HepG2 (cell line): ENCODE measurements at regions of chr1 and their contacts with region 1.

Region 1: DNA sequence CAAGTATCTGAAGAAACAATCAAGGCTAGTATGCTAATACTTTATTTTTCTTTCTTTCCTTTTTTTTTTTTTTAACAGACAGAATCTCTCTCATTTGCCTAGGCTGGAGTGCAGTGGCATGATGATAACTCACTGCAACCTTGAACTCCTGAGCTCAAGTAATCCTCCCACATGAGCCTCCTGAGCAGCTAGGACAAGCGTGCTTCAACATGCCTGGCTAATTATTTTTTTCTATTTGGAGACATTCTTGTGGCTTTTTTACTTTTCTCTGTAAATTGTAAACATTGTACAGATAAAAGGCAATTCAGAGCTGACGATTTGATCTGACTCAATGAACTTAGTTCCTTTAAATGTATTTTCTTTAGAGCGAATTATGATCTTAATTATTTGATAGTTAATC is 41.4 kb downstream of the CCDC18 start:
- DNase-seq: peak; percentile 87
- ATAC-seq: peak; percentile 91
- H3K4me3 ChIP-seq: no peak overlapping the region; a peak in 1 of 6 replicates
- H3K27ac ChIP-seq: peak overlapping the region; percentile 71
- H3K4me1 ChIP-seq: peaks cover 28% of the 10 kb centered on the region
- H3K27me3 ChIP-seq: no peaks in the 10 kb centered on the region
- CTCF ChIP-seq: no peak
- EP300 ChIP-seq: peak in 1 of 2 experiments; percentile 87; a peak in 2 of 4 replicates
- POLR2A ChIP-seq: no peak
- RAD21 ChIP-seq: no peak

Region 2: GRCh38 chr1:93275634-93276295 is 53.9 kb after region 1 on chr1:
- CTCF ChIA-PET with region 1: no interaction called
- POLR2A ChIA-PET with region 1: interaction called, 12 read pairs
- in situ Hi-C with region 1: no loop called
- intact Hi-C with region 1: no loop called
- DNase-seq: peak; percentile 86
- ATAC-seq: peak; percentile 99
- H3K4me3 ChIP-seq: peak overlapping the region; percentile 22 to 56 (median 46); a peak in 5 of 6 replicates
- H3K27ac ChIP-seq: peak overlapping the region; percentile 94
- H3K4me1 ChIP-seq: peaks cover 37% of the 10 kb centered on the region
- H3K27me3 ChIP-seq: no peaks in the 10 kb centered on the region
- CTCF ChIP-seq: no peak
- EP300 ChIP-seq: peak in 1 of 2 experiments; percentile 34; a peak in 1 of 4 replicates
- POLR2A ChIP-seq: no peak
- RAD21 ChIP-seq: no peak

Region 3: DNA sequence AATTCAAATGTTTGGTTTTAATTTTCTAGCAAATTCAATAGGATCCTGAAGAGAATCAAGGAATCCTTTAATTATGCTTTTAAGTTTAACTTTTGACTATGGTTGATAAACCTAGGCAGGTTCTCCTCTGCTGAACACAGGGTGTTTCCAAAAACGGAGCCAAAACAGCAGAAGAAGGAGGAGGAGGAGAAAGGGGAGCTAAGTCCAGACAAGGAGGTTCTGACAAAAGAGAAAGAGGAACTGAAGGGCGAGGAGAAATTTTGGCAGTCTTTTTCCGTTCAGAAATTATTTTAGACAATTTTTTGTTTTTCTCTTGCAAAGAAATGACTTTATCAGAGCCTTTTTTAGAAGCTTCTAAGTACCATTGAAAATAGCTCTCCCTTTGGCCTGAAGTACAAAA is 192.8 kb after region 1 on chr1:
- CTCF ChIA-PET with region 1: no interaction called
- POLR2A ChIA-PET with region 1: no interaction called
- in situ Hi-C with region 1: no loop called
- intact Hi-C with region 1: no loop called
- DNase-seq: no peak
- ATAC-seq: no peak
- H3K4me3 ChIP-seq: no peak overlapping the region
- H3K27ac ChIP-seq: no peak overlapping the region
- H3K4me1 ChIP-seq: 0 out of 2 replicates have a peak, but pooled peaks cover 6% of the 10 kb centered on the region
- H3K27me3 ChIP-seq: peaks cover 0 to 5% of the 10 kb centered on the region in 2 experiments; a peak in 2 of 5 replicates
- CTCF ChIP-seq: no peak
- EP300 ChIP-seq: no peak
- POLR2A ChIP-seq: no peak
- RAD21 ChIP-seq: no peak